ENCODE measurements at regions of chr6 and their contacts with region 1.

Region 1: DNA sequence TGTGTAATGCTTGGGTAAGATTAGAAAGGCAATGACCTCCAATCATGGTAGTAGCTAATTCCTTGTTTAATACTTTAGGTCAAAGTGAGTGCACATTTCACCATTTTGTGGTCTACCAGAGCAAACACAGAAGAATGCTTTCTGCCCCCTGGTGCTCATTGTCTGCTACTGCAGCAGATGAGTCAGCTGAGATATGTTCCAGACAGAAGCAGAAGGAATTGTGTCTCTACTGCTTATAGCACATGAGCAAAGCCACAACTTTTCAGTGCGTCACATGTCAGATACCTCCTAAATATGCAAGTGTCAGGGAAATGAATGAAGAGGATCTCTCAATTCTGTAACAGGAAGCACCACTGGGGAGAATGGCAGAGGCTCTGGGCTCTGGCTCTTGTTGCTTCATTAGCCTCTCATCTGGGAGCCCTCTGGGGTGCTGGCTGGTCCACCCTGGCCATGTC is 308.9 kb downstream of the ALDH8A1 start:
- DNase-seq: peak; percentile 62 to 86
- ATAC-seq: peak; percentile 73 to 92 (median 88)
- H3K4me3 ChIP-seq: no peak overlapping the region
- H3K27ac ChIP-seq: peak overlapping the region in 5 of 10 donors; percentile 3 to 61 (median 6)
- H3K4me1 ChIP-seq: peaks cover 0 to 28% (median 9%) of the 10 kb centered on the region in 9 donors
- H3K27me3 ChIP-seq: no peaks in the 10 kb centered on the region
- CTCF ChIP-seq: peak; percentile 81 to 98 (median 96)

Region 2: DNA sequence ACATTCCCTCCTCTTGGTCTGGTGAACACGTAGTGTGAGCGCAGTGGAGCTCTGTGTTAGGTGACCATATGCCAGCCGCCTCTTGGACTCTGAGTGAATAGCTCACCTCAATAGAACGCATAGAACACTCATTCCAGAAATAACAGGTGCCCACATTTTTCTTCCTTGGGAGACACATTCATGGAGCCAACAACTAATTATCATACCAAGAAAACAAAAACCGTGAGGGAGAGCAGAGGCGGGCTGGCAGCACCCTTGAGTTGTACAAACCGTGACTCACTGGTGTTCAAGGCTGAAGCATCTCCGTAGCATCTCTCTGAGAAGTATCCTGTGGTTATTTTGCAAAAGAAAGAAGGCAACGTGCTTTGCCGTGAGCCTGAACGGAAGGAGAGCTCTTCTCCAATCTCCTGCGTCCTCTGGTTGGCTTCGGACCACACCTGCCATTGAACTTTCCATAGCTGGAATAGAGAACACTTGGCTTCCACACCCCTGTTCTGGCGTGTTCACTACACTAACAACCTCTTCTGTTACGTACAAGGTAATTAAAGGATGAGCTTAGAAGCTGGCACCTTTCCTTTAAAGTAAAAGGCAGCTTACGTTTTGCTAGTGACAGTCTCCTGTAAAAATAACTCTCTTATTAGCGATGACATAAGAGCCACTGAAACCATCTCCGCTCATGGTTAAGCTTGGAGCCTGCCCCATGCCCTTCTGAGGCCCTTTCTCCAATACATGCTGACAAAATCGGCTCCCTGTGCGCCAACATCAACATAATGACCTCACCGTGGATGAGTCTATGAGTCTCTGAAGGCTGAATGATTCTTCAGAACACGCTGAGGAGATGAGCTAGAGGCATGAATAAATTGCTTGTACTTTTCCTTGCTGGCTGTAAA is 292.8 kb before region 1 on chr6:
- intact Hi-C with region 1: loop called in 1 of 10 experiments (anchors 10 kb)
- DNase-seq: peak in 1 of 2 donors; percentile 20
- ATAC-seq: peak in 4 of 8 donors; percentile 33 to 84 (median 42)
- H3K4me3 ChIP-seq: no peak overlapping the region
- H3K27ac ChIP-seq: peak overlapping the region in 6 of 10 donors; percentile 25 to 94 (median 42)
- H3K4me1 ChIP-seq: peaks cover 0 to 39% (median 17%) of the 10 kb centered on the region in 9 donors
- H3K27me3 ChIP-seq: no peaks in the 10 kb centered on the region
- CTCF ChIP-seq: no peak

Region 3: DNA sequence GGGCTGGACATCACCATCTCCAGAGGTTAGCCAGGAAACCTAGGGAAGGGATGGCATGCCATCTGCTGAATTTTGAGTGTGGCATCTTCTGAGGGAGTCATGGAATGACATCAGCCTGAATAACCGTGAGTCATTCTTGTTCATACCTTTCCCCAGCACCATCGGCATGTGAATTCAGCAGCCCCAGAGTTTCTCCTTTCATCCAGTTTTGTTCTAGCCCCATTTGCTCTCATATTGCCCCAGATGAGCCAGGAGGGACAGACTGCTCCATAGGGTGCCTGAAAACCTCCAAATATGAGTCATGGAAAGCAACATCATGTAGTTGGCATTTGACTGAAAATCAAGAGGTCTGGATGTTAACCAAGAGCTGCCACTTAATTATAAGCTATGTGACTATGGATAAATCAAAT is 103.9 kb before region 1 on chr6:
- intact Hi-C with region 1: loop called in 2 of 10 experiments (anchors 5 to 10 kb)
- DNase-seq: no peak
- ATAC-seq: no peak
- H3K4me3 ChIP-seq: no peak overlapping the region
- H3K27ac ChIP-seq: no peak overlapping the region
- H3K4me1 ChIP-seq: peaks cover 0 to 48% (median 16%) of the 10 kb centered on the region in 9 donors
- H3K27me3 ChIP-seq: no peaks in the 10 kb centered on the region
- CTCF ChIP-seq: no peak

Region 4: GRCh38 chr6:134882426-134883038 is 241.5 kb after region 1 on chr6:
- intact Hi-C with region 1: loop called in 2 of 10 experiments (anchors 5 to 10 kb)
- DNase-seq: peak; percentile 34 to 38
- ATAC-seq: peak in 6 of 8 donors; percentile 51 to 79 (median 61)
- H3K4me3 ChIP-seq: no peak overlapping the region
- H3K27ac ChIP-seq: no peak overlapping the region
- H3K4me1 ChIP-seq: peaks cover 0 to 9% (median 0%) of the 10 kb centered on the region in 9 donors
- H3K27me3 ChIP-seq: peaks cover 0 to 7% (median 0%) of the 10 kb centered on the region in 7 donors
- CTCF ChIP-seq: peak; percentile 61 to 96 (median 94)

Region 5: GRCh38 chr6:134949927-134950326 is 308.9 kb after region 1 on chr6 and contains the start of gene ALDH8A1:
- intact Hi-C with region 1: loop called in 1 of 10 experiments (anchors 10 kb)
- DNase-seq: no peak
- ATAC-seq: no peak
- H3K4me3 ChIP-seq: no peak within 1 kb of the TSS
- H3K27ac ChIP-seq: no peak within 1 kb of the TSS
- H3K4me1 ChIP-seq: no peaks in the 10 kb centered on the region
- H3K27me3 ChIP-seq: no peaks in the 10 kb centered on the region
- CTCF ChIP-seq: no peak
- total RNA-seq, gene ALDH8A1: 0.09 to 0.42 (median 0.24) TPM in 5 of 10 donors, not detected in the others

Measured in heart right ventricle (tissue), 16 donors.